Natural killer cell (primary cell): ENCODE measurements at regions of chr16 and their contacts with region 1.

Region 1: GRCh38 chr16:79369796-79370195 is 230.7 kb downstream of the MAF start:
- DNase-seq: no peak
- ATAC-seq: no peak
- H3K4me3 ChIP-seq: no peak overlapping the region
- H3K4me3 Mint-ChIP-seq: peak overlapping the region; percentile 53
- H3K27ac ChIP-seq: no peak overlapping the region
- H3K27ac Mint-ChIP-seq: peak overlapping the region; percentile 72 to 77
- H3K4me1 ChIP-seq: peaks cover 13% of the 10 kb centered on the region
- H3K4me1 Mint-ChIP-seq: peaks cover 33 to 44% of the 10 kb centered on the region in 2 donors
- H3K27me3 ChIP-seq: no peaks in the 10 kb centered on the region
- H3K27me3 Mint-ChIP-seq: peaks cover 4 to 9% of the 10 kb centered on the region in 2 donors
- CTCF ChIP-seq: no peak

Region 2: GRCh38 chr16:79201436-79201835 is 168.4 kb before region 1 on chr16:
- intact Hi-C with region 1: no loop called
- DNase-seq: no peak
- ATAC-seq: no peak
- H3K4me3 ChIP-seq: no peak overlapping the region
- H3K4me3 Mint-ChIP-seq: no peak overlapping the region
- H3K27ac ChIP-seq: no peak overlapping the region
- H3K27ac Mint-ChIP-seq: no peak overlapping the region
- H3K4me1 ChIP-seq: peaks cover 4% of the 10 kb centered on the region
- H3K4me1 Mint-ChIP-seq: peaks cover 2 to 11% of the 10 kb centered on the region in 2 donors
- H3K27me3 ChIP-seq: no peaks in the 10 kb centered on the region
- H3K27me3 Mint-ChIP-seq: no peaks in the 10 kb centered on the region
- CTCF ChIP-seq: no peak

Region 3: GRCh38 chr16:79381552-79382042 is 11.8 kb after region 1 on chr16:
- intact Hi-C with region 1: loop called (anchors 1 kb)
- DNase-seq: peak; percentile 24 to 58
- ATAC-seq: peak; percentile 60 to 69 (median 68)
- H3K4me3 ChIP-seq: peak overlapping the region; percentile 2
- H3K4me3 Mint-ChIP-seq: peak overlapping the region; percentile 86
- H3K27ac ChIP-seq: peak overlapping the region; percentile 70
- H3K27ac Mint-ChIP-seq: peak overlapping the region; percentile 88 to 91
- H3K4me1 ChIP-seq: peaks cover 13% of the 10 kb centered on the region
- H3K4me1 Mint-ChIP-seq: peaks cover 37 to 40% of the 10 kb centered on the region in 2 donors
- H3K27me3 ChIP-seq: no peaks in the 10 kb centered on the region
- H3K27me3 Mint-ChIP-seq: no peaks in the 10 kb centered on the region
- CTCF ChIP-seq: no peak

Region 4: GRCh38 chr16:79393127-79393526 is 23.3 kb after region 1 on chr16:
- intact Hi-C with region 1: no loop called
- DNase-seq: no peak
- ATAC-seq: no peak
- H3K4me3 ChIP-seq: no peak overlapping the region
- H3K4me3 Mint-ChIP-seq: no peak overlapping the region
- H3K27ac ChIP-seq: no peak overlapping the region
- H3K27ac Mint-ChIP-seq: no peak overlapping the region
- H3K4me1 ChIP-seq: peaks cover 6% of the 10 kb centered on the region
- H3K4me1 Mint-ChIP-seq: peaks cover 13% of the 10 kb centered on the region in 2 donors
- H3K27me3 ChIP-seq: no peaks in the 10 kb centered on the region
- H3K27me3 Mint-ChIP-seq: peaks cover 0 to 6% of the 10 kb centered on the region in 2 donors
- CTCF ChIP-seq: no peak

Region 5: DNA sequence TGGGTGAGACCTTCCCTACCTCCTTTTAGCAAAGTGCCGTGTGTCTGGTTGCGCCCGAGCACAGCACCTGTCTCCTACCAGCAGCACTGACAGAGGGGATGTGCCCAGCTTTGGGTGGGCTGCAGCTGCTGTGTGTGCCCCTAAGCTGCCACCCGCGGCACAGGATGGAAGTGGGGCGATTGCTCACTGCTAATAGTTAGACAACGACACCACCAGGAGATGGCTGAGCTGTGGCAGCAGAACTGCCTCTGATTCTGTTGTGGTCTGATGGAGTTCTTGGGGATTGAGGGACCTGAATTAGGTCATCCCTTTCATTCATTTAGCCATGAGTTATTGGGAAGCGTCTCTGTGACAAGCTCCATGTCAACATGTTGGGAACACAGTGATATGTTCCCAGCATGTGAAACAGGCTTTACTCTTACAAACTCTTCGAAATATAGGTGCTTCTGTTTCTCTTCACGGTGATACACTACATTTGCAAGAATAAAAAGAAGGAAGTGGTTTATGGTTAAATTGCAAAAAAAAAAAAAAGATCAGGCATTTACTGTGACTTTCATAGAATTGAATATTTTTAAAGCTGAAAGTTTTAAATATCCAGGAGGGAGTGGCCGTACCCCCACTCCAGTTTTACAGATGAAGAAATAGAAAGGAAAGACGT is 46.3 kb after region 1 on chr16:
- intact Hi-C with region 1: no loop called
- DNase-seq: peak; percentile 20 to 44
- ATAC-seq: peak; percentile 64 to 81 (median 75)
- H3K4me3 ChIP-seq: no peak overlapping the region
- H3K4me3 Mint-ChIP-seq: peak overlapping the region; percentile 94
- H3K27ac ChIP-seq: peak overlapping the region; percentile 30
- H3K27ac Mint-ChIP-seq: peak overlapping the region; percentile 86 to 90
- H3K4me1 ChIP-seq: peaks cover 28% of the 10 kb centered on the region
- H3K4me1 Mint-ChIP-seq: peaks cover 48 to 63% of the 10 kb centered on the region in 2 donors
- H3K27me3 ChIP-seq: no peaks in the 10 kb centered on the region
- H3K27me3 Mint-ChIP-seq: peaks cover 0 to under 1% of the 10 kb centered on the region in 2 donors
- CTCF ChIP-seq: no peak